Sigmoid colon (tissue), 7 donors: ENCODE measurements at regions of chr5 and their contacts with region 1.

Region 1: GRCh38 chr5:109688971-109689739 is 572 bp upstream of the MAN2A1 start:
- DNase-seq: peak; percentile 92
- H3K4me3 ChIP-seq: peak overlapping the region; percentile 74 to 95 (median 86)
- H3K27ac ChIP-seq: peak overlapping the region; percentile 96 to 99 (median 98)
- H3K4me1 ChIP-seq: peaks cover 0 to 34% (median 30%) of the 10 kb centered on the region in 4 donors
- H3K27me3 ChIP-seq: no peaks in the 10 kb centered on the region
- CTCF ChIP-seq: no peak
- EP300 ChIP-seq: no peak
- POLR2A ChIP-seq: peak; percentile 79 to 86

Region 2: GRCh38 chr5:108381954-108382783 is 1307.0 kb before region 1 on chr5 and contains the start of gene FBXL17:
- intact Hi-C with region 1: loop called (anchors 5 kb)
- DNase-seq: peak; percentile 97
- H3K4me3 ChIP-seq: peak within 1 kb of the TSS; percentile 84 to 96 (median 92)
- H3K27ac ChIP-seq: peak within 1 kb of the TSS; percentile 98 to 99 (median 99)
- H3K4me1 ChIP-seq: peaks cover 0 to 31% (median 20%) of the 10 kb centered on the region in 4 donors
- H3K27me3 ChIP-seq: no peaks in the 10 kb centered on the region
- CTCF ChIP-seq: no peak
- EP300 ChIP-seq: no peak
- POLR2A ChIP-seq: peak; percentile 64 to 69
- total RNA-seq, gene FBXL17: 16.6 to 22.5 (median 20.0) TPM

Region 3: GRCh38 chr5:109852371-109853155 is 163.4 kb after region 1 on chr5:
- intact Hi-C with region 1: loop called (anchors 5 kb)
- DNase-seq: no peak
- H3K4me3 ChIP-seq: no peak overlapping the region
- H3K27ac ChIP-seq: no peak overlapping the region
- H3K4me1 ChIP-seq: peaks cover 0 to 12% (median 7%) of the 10 kb centered on the region in 4 donors
- H3K27me3 ChIP-seq: no peaks in the 10 kb centered on the region
- CTCF ChIP-seq: no peak
- EP300 ChIP-seq: no peak
- POLR2A ChIP-seq: no peak

Region 4: DNA sequence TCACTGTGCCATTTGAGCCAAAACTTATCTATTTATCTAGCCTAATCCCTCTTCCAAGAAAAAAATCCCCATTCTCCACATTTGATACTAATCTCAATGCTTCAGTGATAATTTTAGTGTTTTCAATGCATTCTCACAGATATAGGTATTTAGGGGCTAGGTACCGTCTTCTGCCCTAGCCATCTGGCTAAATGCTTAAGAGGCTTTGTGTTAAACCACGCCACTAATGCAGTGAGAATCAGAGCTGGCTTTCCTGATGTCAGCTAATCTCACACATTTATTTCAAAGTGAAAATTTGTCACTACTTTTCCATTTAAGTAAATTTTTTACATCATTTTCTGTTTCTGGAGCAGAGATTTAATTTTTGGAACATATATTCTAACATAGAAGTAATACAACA is 480.3 kb after region 1 on chr5:
- intact Hi-C with region 1: no loop called
- DNase-seq: no peak
- H3K4me3 ChIP-seq: no peak overlapping the region
- H3K27ac ChIP-seq: no peak overlapping the region
- H3K4me1 ChIP-seq: no peaks in the 10 kb centered on the region
- H3K27me3 ChIP-seq: no peaks in the 10 kb centered on the region
- CTCF ChIP-seq: no peak
- EP300 ChIP-seq: no peak
- POLR2A ChIP-seq: no peak

Region 5: GRCh38 chr5:110262749-110263148 is 573.6 kb after region 1 on chr5:
- intact Hi-C with region 1: loop called (anchors 5 kb)
- DNase-seq: no peak
- H3K4me3 ChIP-seq: no peak overlapping the region
- H3K27ac ChIP-seq: peak overlapping the region in 1 of 4 donors; percentile 21
- H3K4me1 ChIP-seq: peaks cover 0 to 44% (median 40%) of the 10 kb centered on the region in 4 donors
- H3K27me3 ChIP-seq: no peaks in the 10 kb centered on the region
- CTCF ChIP-seq: no peak
- EP300 ChIP-seq: no peak
- POLR2A ChIP-seq: no peak

Region 6: DNA sequence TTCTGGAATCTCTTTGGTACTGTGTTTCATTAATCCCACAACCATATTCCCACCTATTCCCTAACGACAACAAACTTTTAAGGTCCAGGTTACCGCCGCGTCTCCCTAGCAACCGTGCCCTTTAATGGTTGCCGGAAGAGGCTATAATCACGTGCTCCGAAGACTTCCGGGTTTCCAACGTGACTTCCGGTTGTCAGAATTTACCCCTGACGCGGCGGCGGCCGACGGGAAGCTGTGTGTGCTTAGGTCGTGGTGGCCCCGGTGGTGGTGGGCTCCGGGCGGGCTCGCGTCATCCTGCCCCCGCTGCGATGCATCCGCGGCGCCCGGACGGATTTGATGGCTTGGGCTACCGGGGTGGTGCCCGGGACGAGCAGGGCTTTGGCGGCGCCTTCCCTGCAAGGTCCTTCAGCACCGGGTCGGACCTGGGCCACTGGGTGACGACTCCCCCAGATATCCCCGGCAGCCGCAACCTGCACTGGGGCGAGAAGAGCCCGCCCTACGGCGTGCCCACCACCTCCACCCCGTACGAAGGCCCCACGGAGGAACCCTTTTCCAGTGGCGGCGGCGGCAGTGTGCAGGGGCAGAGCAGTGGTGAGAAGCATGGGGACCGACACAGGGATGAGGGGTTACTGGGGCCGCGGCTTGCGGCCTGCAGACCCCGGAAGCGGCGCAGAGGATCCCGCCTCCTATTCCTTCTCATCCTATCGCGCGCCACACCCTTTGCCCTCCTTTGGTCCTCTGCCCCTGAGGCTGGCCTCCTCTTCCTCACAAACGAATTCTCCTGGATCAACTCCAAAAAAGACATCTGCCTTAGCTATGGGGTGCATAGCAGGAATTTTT is 1049.9 kb after region 1 on chr5 and contains the start of gene SLC25A46:
- intact Hi-C with region 1: loop called (anchors 2 kb)
- DNase-seq: peak; percentile 93
- H3K4me3 ChIP-seq: peak within 1 kb of the TSS; percentile 85 to 94 (median 90)
- H3K27ac ChIP-seq: peak within 1 kb of the TSS; percentile 86 to 94 (median 91)
- H3K4me1 ChIP-seq: peaks cover 0 to 27% (median 17%) of the 10 kb centered on the region in 4 donors
- H3K27me3 ChIP-seq: no peaks in the 10 kb centered on the region
- CTCF ChIP-seq: no peak
- EP300 ChIP-seq: no peak
- POLR2A ChIP-seq: no peak
- total RNA-seq, gene SLC25A46: 51.6 to 71.7 (median 59.3) TPM